ENCODE measurements at regions of chr10 and their contacts with region 1.

Region 1: DNA sequence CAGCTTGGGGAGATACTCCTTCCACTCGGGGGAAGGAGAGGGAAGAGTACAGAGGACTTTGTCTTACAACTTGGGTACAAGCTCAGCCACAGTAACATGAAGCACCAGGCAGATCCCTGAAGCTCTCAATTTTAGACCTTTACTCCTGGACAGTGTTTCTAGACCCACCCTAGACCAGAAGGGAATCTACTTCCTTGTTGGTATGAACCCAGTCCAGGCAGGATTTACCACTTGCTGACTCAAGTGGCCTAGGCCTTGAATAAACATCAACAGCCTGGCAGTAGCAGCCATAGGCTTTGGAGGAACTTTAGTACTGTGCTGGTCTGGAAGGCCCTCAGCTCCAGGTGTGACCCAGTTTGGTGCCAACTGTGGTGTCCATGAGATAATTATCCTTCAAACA is 173.1 kb downstream of the ADRA2A start:
- DNase-seq: no peak
- ATAC-seq: no peak
- H3K4me3 ChIP-seq: no peak overlapping the region
- H3K27ac ChIP-seq: no peak overlapping the region
- H3K4me1 ChIP-seq: no peaks in the 10 kb centered on the region
- H3K27me3 ChIP-seq: no peaks in the 10 kb centered on the region; the same call in 1 of the 2 replicates
- CTCF ChIP-seq: no peak

Region 2: DNA sequence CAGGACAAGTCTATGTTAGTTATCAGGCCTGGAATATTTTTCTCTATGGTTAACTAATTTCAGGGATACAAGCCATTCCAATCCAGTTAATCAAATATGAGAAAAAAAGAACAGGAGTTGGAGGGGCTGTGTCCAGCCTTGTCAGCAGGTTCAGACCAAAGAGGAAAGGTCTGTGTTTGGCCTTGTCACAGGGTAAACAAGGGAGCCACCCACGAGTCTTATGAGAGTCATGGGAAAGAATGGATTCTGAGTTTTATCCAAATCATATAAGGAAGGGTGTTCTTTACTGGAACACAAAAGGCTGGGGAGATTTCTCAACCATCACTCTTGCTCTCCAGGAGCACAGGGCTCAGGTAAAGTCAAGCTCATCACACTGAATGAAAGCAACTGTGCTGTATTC is 1425.7 kb before region 1 on chr10:
- CTCF ChIA-PET with region 1: interaction called, 13 read pairs
- POLR2A ChIA-PET with region 1: no interaction called
- in situ Hi-C with region 1: no loop called
- intact Hi-C with region 1: no loop called
- DNase-seq: no peak
- ATAC-seq: no peak
- H3K4me3 ChIP-seq: no peak overlapping the region
- H3K27ac ChIP-seq: no peak overlapping the region
- H3K4me1 ChIP-seq: no peaks in the 10 kb centered on the region
- H3K27me3 ChIP-seq: no peaks in the 10 kb centered on the region
- CTCF ChIP-seq: no peak

Region 3: GRCh38 chr10:111109501-111110242 is 140.3 kb before region 1 on chr10:
- CTCF ChIA-PET with region 1: no interaction called
- POLR2A ChIA-PET with region 1: no interaction called
- in situ Hi-C with region 1: no loop called
- intact Hi-C with region 1: no loop called
- DNase-seq: no peak
- ATAC-seq: no peak
- H3K4me3 ChIP-seq: no peak overlapping the region
- H3K27ac ChIP-seq: no peak overlapping the region
- H3K4me1 ChIP-seq: no peaks in the 10 kb centered on the region
- H3K27me3 ChIP-seq: peaks cover 2% of the 10 kb centered on the region; the same call in 1 of the 2 replicates
- CTCF ChIP-seq: no peak

Region 4: DNA sequence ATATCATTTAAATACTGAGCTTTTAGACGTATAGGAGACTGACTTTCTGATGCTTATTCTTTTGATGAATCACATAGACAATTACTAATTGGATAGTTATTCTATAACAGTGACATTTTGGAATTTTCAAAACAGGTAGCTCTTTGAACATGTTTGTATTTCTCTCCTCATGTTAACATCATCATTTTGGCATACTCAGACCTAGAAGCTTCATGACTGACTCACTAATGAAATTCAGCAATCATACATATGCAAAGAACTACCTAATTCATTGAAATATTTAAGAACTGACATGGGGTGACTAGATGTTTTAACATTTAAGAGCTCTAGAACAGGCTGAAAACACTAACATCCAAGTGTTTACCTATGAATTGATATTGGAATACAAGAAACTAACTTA is 1389.4 kb after region 1 on chr10:
- CTCF ChIA-PET with region 1: no interaction called
- POLR2A ChIA-PET with region 1: no interaction called
- in situ Hi-C with region 1: no loop called
- intact Hi-C with region 1: no loop called
- DNase-seq: no peak
- ATAC-seq: no peak
- H3K4me3 ChIP-seq: no peak overlapping the region
- H3K27ac ChIP-seq: no peak overlapping the region
- H3K4me1 ChIP-seq: 0 out of 2 replicates have a peak, but pooled peaks cover 3% of the 10 kb centered on the region
- H3K27me3 ChIP-seq: no peaks in the 10 kb centered on the region
- CTCF ChIP-seq: no peak

Measured in Panc1 (cell line).